HepG2 (cell line): ENCODE measurements at regions of chr15 and their contacts with region 1.

Region 1: DNA sequence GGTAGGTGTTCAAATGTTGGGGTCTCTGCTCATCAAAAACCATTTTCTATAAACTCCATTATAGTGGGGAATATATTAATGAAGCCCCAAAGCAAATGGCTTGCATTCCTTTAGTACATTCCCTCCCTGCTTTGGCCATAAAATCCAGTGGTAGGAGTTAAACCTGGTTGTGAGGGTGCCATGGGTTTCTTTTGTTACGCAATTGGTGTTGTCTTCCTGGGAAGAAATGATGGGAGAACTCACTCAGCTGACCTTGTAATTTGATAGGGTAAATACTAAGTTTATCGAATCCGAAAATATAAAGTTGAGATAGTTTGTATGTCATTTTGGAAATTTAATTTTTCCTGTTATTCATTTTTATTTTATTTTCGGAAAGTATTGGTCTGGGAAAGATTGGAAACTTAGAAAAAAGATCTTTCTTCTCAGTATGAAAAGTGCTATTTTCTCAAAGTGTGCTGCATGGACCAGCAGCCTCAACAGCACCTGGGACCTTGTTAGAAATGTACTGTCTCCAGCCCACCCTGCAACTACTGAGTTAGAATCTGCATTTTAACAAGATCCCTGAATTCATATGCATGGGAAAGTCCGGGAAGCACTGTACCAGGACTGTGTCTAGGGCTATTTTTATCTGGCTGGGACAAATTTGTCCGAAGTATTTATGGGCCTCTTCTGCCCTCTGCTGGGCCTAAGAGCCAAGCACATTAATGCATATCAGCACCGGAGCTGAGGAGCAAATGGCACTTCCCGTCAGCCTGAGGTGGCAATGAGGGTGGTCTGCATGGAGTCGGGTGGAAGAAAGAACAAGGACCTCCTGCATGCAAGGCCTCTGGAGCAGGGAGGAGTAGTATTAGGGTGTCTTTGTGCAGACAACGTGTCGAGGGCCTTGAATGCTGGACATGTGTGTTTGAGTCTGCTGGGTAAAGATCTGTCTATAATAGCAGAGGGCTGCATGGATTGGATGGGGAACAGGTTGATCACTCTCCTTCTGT is 54.7 kb downstream of the FAM81A start:
- DNase-seq: peak; percentile 65
- ATAC-seq: peak; percentile 95
- H3K4me3 ChIP-seq: no peak overlapping the region; a peak in 1 of 6 replicates
- H3K27ac ChIP-seq: no peak overlapping the region
- H3K4me1 ChIP-seq: peaks cover 12% of the 10 kb centered on the region; the same call in 1 of the 2 replicates
- H3K27me3 ChIP-seq: 0 out of 5 replicates have a peak, but pooled peaks cover 0 to 3% of the 10 kb centered on the region in 2 experiments
- CTCF ChIP-seq: peak; percentile 93
- EP300 ChIP-seq: no peak
- POLR2A ChIP-seq: no peak
- RAD21 ChIP-seq: peak; percentile 90

Region 2: GRCh38 chr15:58957101-58957973 is 535.3 kb before region 1 on chr15:
- CTCF ChIA-PET with region 1: interaction called, 8 read pairs
- POLR2A ChIA-PET with region 1: no interaction called
- in situ Hi-C with region 1: loop called (anchors 10 kb)
- intact Hi-C with region 1: loop called (anchors 5 kb)
- DNase-seq: peak; percentile 69
- ATAC-seq: peak; percentile 99
- H3K4me3 ChIP-seq: no peak overlapping the region; a peak in 1 of 6 replicates
- H3K27ac ChIP-seq: no peak overlapping the region
- H3K4me1 ChIP-seq: no peaks in the 10 kb centered on the region
- H3K27me3 ChIP-seq: no peaks in the 10 kb centered on the region
- CTCF ChIP-seq: peak; percentile 79
- EP300 ChIP-seq: no peak
- POLR2A ChIP-seq: no peak
- RAD21 ChIP-seq: peak; percentile 49; the same call in 1 of the 2 replicates

Region 3: DNA sequence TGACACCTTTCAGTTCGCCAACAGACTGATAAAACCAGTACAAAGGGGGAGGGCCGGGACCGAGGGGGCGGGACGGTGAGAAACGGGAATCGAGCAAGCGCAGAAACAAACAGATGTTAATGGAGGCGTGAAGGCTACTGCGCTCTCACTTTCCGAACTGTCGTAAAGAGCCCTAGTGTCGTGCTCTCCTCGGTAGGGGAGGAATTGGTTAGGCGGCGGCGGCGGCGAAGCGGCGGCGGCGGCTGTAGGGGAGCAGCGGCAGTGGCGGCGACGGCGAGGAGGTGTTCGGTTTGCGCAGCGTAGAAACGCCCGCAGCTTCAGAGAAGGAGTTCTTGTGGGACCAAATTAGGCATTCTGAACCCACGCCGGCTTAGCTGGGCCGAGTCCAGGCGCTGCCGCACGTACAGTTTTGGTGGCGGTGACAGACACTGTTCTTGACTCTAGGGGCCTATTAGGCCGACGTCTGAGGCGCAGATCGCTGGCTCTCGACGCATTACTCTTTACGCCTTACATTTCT is 505.1 kb before region 1 on chr15 and contains the start of gene RNF111:
- CTCF ChIA-PET with region 1: no interaction called
- POLR2A ChIA-PET with region 1: no interaction called
- in situ Hi-C with region 1: loop called (anchors 10 kb)
- intact Hi-C with region 1: no loop called
- DNase-seq: peak; percentile 93
- ATAC-seq: peak; percentile 80
- H3K4me3 ChIP-seq: peak within 1 kb of the TSS; percentile 90 to 99 (median 97)
- H3K27ac ChIP-seq: peak within 1 kb of the TSS; percentile 97
- H3K4me1 ChIP-seq: peaks cover 37% of the 10 kb centered on the region
- H3K27me3 ChIP-seq: no peaks in the 10 kb centered on the region; a peak in 1 of 5 replicates
- CTCF ChIP-seq: no peak
- EP300 ChIP-seq: no peak
- POLR2A ChIP-seq: peak; percentile 50 to 69; a peak in 3 of 4 replicates
- RAD21 ChIP-seq: no peak
- total RNA-seq, gene RNF111: 12.1 and 16.0 TPM in 2 replicates

Region 4: DNA sequence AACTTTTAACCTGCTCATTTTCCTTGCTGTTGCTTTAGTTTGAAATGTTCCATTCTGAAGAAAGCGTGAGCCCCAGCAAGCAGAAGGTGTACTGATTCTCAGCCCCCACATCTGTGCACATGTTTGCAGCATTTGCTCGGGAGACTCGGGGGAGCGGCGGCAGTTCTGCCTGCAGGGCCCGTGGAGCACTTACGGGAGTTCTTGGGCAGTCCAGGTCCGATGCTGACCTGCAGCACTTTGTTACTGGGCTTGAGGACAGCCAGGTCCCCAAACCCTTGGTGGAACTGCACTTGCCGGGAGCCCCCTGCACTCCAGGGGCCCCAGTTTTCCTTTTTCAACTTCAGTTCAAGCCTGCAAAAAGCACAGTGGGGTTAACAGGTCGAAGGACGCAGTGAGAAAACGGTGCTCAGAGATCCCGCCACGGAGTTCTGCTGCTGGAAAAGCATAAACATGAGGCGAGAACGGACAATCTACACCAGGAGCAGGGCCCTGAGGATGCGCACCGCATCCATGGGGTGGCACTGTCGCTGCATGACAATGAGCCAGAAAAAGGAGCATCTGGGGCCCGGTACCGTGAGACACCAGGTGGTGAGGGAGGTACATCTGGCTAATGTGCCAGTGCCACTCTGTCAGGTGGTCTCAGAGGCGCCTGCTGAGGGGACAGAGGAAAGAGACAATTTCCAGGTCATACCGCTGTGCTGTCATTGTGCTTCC is 331.6 kb before region 1 on chr15:
- CTCF ChIA-PET with region 1: interaction called, 18 read pairs
- POLR2A ChIA-PET with region 1: no interaction called
- in situ Hi-C with region 1: loop called (anchors 5 kb)
- intact Hi-C with region 1: loop called (anchors 1 kb)
- DNase-seq: peak; percentile 25
- ATAC-seq: peak; percentile 87
- H3K4me3 ChIP-seq: no peak overlapping the region
- H3K27ac ChIP-seq: no peak overlapping the region
- H3K4me1 ChIP-seq: peaks cover 11% of the 10 kb centered on the region
- H3K27me3 ChIP-seq: no peaks in the 10 kb centered on the region
- CTCF ChIP-seq: peak; percentile 75
- EP300 ChIP-seq: no peak
- POLR2A ChIP-seq: no peak
- RAD21 ChIP-seq: peak; percentile 73

Region 5: DNA sequence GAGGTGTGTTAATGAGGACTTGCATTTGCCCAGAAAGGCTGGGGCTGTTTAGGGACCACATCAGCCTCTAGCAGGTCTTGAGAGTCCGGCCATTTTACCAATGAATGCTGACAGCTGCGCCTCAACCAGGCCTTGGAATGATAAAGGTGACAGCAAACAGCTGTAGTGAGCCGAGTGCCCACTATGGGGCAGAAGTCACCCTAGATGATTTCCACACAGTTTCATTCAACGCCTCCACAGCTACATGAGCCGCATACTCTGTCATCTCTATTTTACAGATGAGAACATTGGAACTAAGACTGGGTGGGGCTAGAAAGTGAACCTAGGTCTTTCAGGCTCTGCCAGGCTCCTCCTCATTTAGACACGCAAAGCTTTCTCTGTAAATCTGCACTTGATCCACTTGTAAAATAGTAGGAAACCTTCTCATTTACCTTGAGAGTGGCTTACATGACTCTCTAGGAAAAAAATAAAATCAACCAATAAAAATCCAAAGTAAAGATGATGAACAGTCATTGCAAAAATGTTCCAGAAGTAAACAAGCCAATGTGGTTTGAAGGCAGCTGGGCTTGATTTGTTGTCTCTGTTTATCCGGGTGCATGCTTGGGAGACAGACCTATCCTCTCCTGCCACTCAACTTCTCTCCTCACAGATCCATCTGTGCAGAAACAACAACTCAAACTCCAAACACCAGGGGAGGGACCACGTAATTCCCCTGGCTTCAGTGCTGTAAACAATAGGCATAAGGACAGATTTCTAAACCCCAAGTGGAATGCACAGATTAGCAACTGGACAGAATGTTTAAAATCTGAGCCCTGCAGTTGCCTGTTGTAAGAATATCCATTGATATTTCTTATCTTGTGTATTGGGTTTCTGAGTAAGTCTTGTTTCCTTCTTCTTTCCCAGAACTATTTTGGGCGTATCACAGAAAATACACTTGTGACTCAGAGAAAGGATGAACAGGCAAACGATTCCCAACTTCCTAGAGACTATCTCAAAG is 317.6 kb before region 1 on chr15:
- CTCF ChIA-PET with region 1: interaction called, 10 read pairs
- POLR2A ChIA-PET with region 1: no interaction called
- in situ Hi-C with region 1: no loop called
- intact Hi-C with region 1: loop called (anchors 1 kb)
- DNase-seq: peak; percentile 47
- ATAC-seq: peak; percentile 95
- H3K4me3 ChIP-seq: no peak overlapping the region
- H3K27ac ChIP-seq: no peak overlapping the region
- H3K4me1 ChIP-seq: peaks cover 6% of the 10 kb centered on the region
- H3K27me3 ChIP-seq: no peaks in the 10 kb centered on the region
- CTCF ChIP-seq: peak; percentile 70
- EP300 ChIP-seq: no peak
- POLR2A ChIP-seq: no peak
- RAD21 ChIP-seq: peak; percentile 64

Region 6: GRCh38 chr15:59372352-59373211 is 120.1 kb before region 1 on chr15 and contains the start of gene MYO1E:
- CTCF ChIA-PET with region 1: no interaction called
- POLR2A ChIA-PET with region 1: no interaction called
- in situ Hi-C with region 1: no loop called
- intact Hi-C with region 1: loop called (anchors 5 kb)
- DNase-seq: peak; percentile 96
- ATAC-seq: peak; percentile 97
- H3K4me3 ChIP-seq: peak within 1 kb of the TSS; percentile 77 to 94 (median 87)
- H3K27ac ChIP-seq: peak within 1 kb of the TSS; percentile 75
- H3K4me1 ChIP-seq: peaks cover 37% of the 10 kb centered on the region
- H3K27me3 ChIP-seq: no peaks in the 10 kb centered on the region
- CTCF ChIP-seq: 0 out of 2 replicates have a peak, but pooled peaks have one; percentile 6
- EP300 ChIP-seq: no peak
- POLR2A ChIP-seq: peak; percentile 90 to 96
- RAD21 ChIP-seq: no peak
- total RNA-seq, gene MYO1E: 25.1 and 38.5 TPM in 2 replicates